ENCODE measurements at regions of chr16 and their contacts with region 1.

Region 1: DNA sequence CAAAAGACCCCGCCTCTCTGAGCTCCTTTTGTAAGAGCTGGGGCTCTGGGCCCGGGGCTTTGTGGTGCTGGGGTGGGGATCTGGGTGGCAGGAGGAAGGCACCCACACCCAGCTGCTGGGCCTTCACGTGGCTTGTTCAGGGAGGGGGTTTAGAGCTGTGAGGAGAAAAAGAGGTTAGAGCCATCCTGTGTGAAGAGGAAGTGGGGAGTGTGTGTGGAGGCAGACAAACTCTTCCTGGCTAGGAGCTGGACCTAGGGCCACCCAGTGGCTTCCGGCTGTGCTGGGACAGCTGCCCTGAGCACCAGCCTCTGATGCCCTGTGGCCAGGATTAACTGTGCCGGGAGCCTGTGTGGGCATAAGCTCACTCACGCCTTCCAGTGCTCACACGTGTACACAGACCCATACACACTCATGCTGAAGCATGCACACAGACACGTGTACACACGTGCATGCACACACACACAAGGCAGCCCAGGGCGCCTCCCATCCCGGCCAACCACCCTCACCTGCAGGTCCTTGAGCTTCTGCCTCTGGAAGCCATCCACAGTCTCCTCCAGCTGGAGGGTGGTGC is 7.4 kb downstream of the CIBAR2 start:
- DNase-seq: peak in 8 of 9 experiments; percentile 17 to 79 (median 42)
- ATAC-seq: peak; percentile 87
- H3K4me3 ChIP-seq: no peak overlapping the region
- H3K4me3 Mint-ChIP-seq: peak overlapping the region; percentile 61
- H3K27ac ChIP-seq: peak overlapping the region; percentile 26 to 71
- H3K27ac Mint-ChIP-seq: peak overlapping the region; percentile 91
- H3K4me1 ChIP-seq: peaks cover 38% of the 10 kb centered on the region
- H3K4me1 Mint-ChIP-seq: peaks cover 41% of the 10 kb centered on the region
- H3K27me3 ChIP-seq: no peaks in the 10 kb centered on the region
- H3K27me3 Mint-ChIP-seq: no peaks in the 10 kb centered on the region
- CTCF ChIP-seq: no peak

Region 2: GRCh38 chr16:85114909-85115567 is 10.1 kb after region 1 on chr16:
- CTCF ChIA-PET with region 1: interaction called, 47 read pairs
- POLR2A ChIA-PET with region 1: interaction called, 6 read pairs
- intact Hi-C with region 1: no loop called
- DNase-seq: peak; percentile 62 to 86 (median 81)
- ATAC-seq: peak; percentile 88
- H3K4me3 ChIP-seq: no peak overlapping the region
- H3K4me3 Mint-ChIP-seq: peak overlapping the region; percentile 70
- H3K27ac ChIP-seq: peak overlapping the region in 1 of 2 experiments; percentile 29
- H3K27ac Mint-ChIP-seq: peak overlapping the region; percentile 79
- H3K4me1 ChIP-seq: peaks cover 4% of the 10 kb centered on the region
- H3K4me1 Mint-ChIP-seq: peaks cover 11% of the 10 kb centered on the region
- H3K27me3 ChIP-seq: no peaks in the 10 kb centered on the region
- H3K27me3 Mint-ChIP-seq: no peaks in the 10 kb centered on the region
- CTCF ChIP-seq: peak; percentile 88